Activated CD4-positive, alpha-beta memory T cell treated with anti-CD3 and anti-CD28 coated beads for 36 hours (primary cell): ENCODE measurements at regions of chr6 and their contacts with region 1.

Region 1: GRCh38 chr6:121699571-121699970 is 264.1 kb downstream of the GJA1 start:
- DNase-seq: no peak
- H3K4me3 Mint-ChIP-seq: no peak overlapping the region
- H3K27ac Mint-ChIP-seq: no peak overlapping the region
- H3K4me1 Mint-ChIP-seq: no peaks in the 10 kb centered on the region
- H3K27me3 Mint-ChIP-seq: peaks cover 1% of the 10 kb centered on the region

Region 2: DNA sequence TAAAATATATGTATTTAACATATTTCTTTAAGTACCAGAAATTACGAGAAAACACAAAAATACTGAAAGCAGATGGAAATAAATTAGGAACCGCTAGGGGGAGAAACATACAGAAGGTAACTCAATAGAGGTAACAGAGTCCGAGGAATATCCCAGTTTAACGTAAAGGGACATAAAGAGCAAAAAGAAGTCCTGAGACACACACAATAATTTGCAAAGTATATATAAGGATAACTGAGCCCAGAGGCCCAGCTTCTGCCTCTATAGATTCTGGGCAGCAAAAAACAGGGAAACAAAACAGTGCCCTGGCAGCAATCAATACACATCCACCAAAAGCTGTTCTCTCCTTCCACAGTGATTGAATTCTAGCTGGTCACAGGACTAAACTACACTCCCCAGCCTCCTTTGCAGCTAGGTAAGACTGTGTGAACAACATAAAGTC is 380.4 kb before region 1 on chr6:
- CTCF ChIA-PET with region 1: no interaction called
- POLR2A ChIA-PET with region 1: no interaction called
- intact Hi-C with region 1: no loop called
- DNase-seq: no peak
- H3K4me3 Mint-ChIP-seq: no peak overlapping the region
- H3K27ac Mint-ChIP-seq: no peak overlapping the region
- H3K4me1 Mint-ChIP-seq: peaks cover 7% of the 10 kb centered on the region
- H3K27me3 Mint-ChIP-seq: no peaks in the 10 kb centered on the region

Region 3: DNA sequence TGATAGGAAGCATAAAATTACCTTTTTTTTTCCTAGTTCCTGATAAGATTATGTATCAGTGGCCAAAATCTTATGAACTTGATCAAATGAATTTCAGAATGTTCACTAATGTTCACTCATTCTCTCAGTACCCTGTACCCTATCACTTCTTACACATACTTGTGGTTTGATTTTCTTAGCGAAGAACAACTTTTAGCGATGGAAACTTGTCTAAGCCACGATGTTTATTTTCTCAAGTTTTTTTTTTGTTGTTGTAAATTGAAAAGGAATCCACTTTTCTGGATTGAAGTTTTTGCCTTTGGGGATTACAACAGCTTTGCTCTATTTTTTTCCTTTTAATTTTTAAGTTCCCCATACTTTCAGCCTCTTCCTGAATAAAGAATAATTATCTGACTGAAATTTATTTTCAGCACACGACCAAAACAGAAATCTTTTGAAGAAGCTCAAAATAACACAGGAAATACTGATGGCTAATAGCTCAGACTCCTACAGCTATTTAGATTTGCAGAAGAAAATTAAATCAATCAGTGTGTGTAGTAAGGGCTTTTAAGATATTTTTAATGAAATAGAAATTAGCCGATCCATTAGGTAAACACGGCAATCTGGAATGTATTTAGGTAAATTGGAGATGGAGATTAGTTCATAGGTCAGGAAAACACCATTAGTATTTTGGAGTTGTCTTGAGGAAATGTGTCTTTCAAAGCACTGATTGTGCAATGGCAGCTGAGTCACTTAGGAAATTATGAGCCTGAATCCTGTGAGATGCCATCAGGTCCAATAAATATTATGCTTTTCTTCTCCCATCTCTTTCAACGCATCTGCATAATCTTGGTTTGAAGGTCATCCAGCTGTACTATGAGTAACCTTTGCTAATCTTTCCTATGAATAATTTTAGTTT is 46.6 kb before region 1 on chr6:
- CTCF ChIA-PET with region 1: no interaction called
- POLR2A ChIA-PET with region 1: no interaction called
- intact Hi-C with region 1: loop called (anchors 1 kb)
- DNase-seq: no peak
- H3K4me3 Mint-ChIP-seq: no peak overlapping the region
- H3K27ac Mint-ChIP-seq: no peak overlapping the region
- H3K4me1 Mint-ChIP-seq: peaks cover 14% of the 10 kb centered on the region
- H3K27me3 Mint-ChIP-seq: no peaks in the 10 kb centered on the region

Region 4: GRCh38 chr6:121666814-121667213 is 32.8 kb before region 1 on chr6:
- CTCF ChIA-PET with region 1: no interaction called
- POLR2A ChIA-PET with region 1: no interaction called
- intact Hi-C with region 1: no loop called
- DNase-seq: no peak
- H3K4me3 Mint-ChIP-seq: no peak overlapping the region
- H3K27ac Mint-ChIP-seq: no peak overlapping the region
- H3K4me1 Mint-ChIP-seq: no peaks in the 10 kb centered on the region
- H3K27me3 Mint-ChIP-seq: no peaks in the 10 kb centered on the region

Region 5: GRCh38 chr6:121770943-121771342 is 71.4 kb after region 1 on chr6:
- CTCF ChIA-PET with region 1: no interaction called
- POLR2A ChIA-PET with region 1: no interaction called
- intact Hi-C with region 1: no loop called
- DNase-seq: no peak
- H3K4me3 Mint-ChIP-seq: no peak overlapping the region
- H3K27ac Mint-ChIP-seq: no peak overlapping the region
- H3K4me1 Mint-ChIP-seq: peaks cover 4% of the 10 kb centered on the region
- H3K27me3 Mint-ChIP-seq: no peaks in the 10 kb centered on the region